ENCODE measurements at regions of chr9 and their contacts with region 1.

Region 1: DNA sequence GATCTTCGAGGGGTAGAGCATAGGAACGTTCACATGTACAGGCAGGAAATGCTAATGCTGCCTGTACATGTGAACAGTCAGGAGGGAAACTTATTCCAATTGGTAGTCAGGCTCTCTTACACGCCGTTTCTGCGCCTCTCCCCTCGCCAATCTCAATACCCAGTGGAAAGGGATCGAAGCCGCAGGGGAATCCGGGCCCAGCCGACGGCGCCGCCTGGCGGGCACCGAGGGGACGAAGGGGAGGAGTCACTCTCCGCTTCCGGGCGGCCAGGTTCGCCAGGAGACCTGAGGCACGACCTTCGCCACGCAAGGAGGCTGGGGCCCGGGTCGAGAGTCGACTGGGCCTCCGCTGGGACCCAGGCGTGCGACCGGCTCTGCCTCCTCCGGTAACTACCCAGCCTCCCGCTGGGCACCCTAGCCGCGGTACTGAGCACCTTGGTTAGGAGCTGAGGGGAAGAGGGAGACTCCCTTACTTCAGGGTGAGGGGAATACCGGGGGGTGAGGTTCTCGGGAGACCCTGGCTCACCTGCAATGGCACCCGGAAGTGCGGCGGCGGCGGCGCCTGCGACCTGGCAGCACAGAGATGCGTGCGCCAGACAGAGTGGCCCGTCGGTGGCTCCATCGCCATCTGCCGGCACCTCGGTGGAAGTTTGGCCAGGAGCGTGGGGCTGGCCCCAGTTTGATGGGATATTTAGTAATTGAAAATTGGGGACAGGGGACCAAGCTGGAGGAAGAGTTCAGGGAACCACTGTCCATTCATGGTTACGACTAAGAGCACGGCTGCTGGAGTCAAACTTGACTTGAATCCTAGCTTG is at the start of gene PIGO:
- DNase-seq: peak; percentile 85
- H3K4me3 Mint-ChIP-seq: peak within 1 kb of the TSS; percentile 85
- H3K27ac Mint-ChIP-seq: peak within 1 kb of the TSS; percentile 90
- H3K4me1 Mint-ChIP-seq: peaks cover 33% of the 10 kb centered on the region
- H3K27me3 Mint-ChIP-seq: no peaks in the 10 kb centered on the region
- total RNA-seq, gene PIGO: 34.4 and 39.7 TPM in 2 replicates

Region 2: DNA sequence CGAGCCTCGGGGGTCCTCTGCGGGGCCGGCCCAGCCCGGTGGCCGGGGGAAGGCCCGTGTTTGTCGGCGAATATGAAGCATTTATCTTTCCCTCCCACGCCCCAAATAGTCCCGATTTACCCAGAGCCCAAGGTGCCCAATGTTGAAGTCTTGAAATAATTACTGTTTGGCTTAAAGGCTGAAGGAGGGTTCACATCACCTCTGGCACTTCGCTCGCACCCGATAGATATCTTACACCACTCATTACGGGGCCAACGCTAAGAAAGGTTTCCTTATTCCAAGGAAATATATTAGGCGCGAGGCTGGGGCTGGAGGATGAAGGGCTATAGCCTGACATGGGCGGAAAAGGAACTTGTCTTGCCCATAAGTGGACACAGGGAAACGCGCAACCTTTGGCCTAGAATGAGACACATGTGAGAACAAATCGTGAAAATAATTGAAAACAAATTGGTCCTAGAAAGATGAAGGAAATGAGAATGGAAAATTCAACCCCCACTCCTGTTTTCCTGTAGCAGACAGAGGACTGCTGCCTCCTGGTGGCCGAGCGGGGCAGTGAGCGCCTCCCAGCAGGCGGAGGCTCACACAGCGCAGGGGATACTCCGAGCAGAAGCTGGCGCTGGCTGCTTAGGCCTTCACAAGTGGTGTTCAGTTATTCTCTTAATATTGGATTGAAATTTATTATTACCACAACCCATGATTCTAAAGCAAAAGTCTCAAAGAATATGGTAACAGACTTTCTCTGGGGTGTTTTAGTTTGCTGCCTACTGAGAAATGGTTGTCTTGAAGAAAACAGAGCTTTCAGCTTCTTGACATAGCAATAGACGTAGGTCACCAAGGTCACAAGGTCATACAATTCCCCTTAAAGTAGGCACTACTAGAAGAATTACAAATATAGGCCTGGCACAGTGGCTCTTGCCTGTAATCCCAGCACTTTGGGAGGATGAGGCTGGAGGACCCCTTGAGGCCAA is 394.2 kb before region 1 on chr9:
- intact Hi-C with region 1: loop called (anchors 5 kb)
- DNase-seq: peak; percentile 66
- H3K4me3 Mint-ChIP-seq: peak overlapping the region; percentile 82
- H3K27ac Mint-ChIP-seq: peak overlapping the region; percentile 68
- H3K4me1 Mint-ChIP-seq: peaks cover 6% of the 10 kb centered on the region
- H3K27me3 Mint-ChIP-seq: peaks cover 29% of the 10 kb centered on the region

Region 3: GRCh38 chr9:34759432-34760134 is 336.7 kb before region 1 on chr9:
- intact Hi-C with region 1: loop called (anchors 1 kb)
- DNase-seq: no peak
- H3K4me3 Mint-ChIP-seq: no peak overlapping the region
- H3K27ac Mint-ChIP-seq: no peak overlapping the region
- H3K4me1 Mint-ChIP-seq: no peaks in the 10 kb centered on the region
- H3K27me3 Mint-ChIP-seq: peaks cover 33% of the 10 kb centered on the region

Region 4: GRCh38 chr9:35051069-35051967 is 44.9 kb before region 1 on chr9:
- intact Hi-C with region 1: loop called (anchors 1 kb)
- DNase-seq: peak; percentile 29
- H3K4me3 Mint-ChIP-seq: no peak overlapping the region
- H3K27ac Mint-ChIP-seq: peak overlapping the region; percentile 27
- H3K4me1 Mint-ChIP-seq: peaks cover 5% of the 10 kb centered on the region
- H3K27me3 Mint-ChIP-seq: no peaks in the 10 kb centered on the region

Region 5: DNA sequence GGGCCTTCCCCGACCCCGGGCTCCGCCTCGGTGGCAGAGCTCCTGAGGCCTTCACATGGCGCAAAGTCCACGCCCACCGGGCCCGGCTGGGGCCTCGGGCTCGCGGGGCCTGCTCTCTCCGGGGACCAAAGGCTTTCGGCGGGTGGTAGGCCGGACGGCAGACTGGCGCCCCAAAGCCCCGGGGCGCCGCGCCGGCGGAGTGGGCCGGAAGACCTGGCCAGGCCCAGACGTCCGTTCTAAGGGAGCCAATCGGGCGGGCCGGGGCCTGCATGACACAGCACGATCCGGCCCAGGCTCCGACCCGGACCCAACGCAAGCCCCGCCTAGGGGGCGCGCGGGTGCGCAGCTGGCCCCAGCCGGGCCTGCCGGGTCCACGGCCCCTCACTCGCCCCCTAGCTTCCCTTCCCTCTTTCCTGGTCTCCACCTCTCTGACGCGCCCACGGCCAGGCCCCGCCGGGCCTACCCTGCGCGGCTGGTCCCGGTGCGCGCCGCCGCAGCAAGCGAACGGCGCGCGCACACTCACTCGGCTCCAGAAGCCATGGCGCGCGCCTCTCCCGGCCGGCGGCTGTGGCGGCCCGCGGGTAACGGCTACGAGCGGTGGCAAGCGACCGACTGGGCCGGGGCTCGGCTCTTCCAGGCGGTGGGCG is 24.3 kb before region 1 on chr9:
- intact Hi-C with region 1: loop called (anchors 1 kb)
- DNase-seq: peak; percentile 72
- H3K4me3 Mint-ChIP-seq: peak overlapping the region; percentile 95
- H3K27ac Mint-ChIP-seq: peak overlapping the region; percentile 92
- H3K4me1 Mint-ChIP-seq: peaks cover 55% of the 10 kb centered on the region
- H3K27me3 Mint-ChIP-seq: no peaks in the 10 kb centered on the region

Region 6: DNA sequence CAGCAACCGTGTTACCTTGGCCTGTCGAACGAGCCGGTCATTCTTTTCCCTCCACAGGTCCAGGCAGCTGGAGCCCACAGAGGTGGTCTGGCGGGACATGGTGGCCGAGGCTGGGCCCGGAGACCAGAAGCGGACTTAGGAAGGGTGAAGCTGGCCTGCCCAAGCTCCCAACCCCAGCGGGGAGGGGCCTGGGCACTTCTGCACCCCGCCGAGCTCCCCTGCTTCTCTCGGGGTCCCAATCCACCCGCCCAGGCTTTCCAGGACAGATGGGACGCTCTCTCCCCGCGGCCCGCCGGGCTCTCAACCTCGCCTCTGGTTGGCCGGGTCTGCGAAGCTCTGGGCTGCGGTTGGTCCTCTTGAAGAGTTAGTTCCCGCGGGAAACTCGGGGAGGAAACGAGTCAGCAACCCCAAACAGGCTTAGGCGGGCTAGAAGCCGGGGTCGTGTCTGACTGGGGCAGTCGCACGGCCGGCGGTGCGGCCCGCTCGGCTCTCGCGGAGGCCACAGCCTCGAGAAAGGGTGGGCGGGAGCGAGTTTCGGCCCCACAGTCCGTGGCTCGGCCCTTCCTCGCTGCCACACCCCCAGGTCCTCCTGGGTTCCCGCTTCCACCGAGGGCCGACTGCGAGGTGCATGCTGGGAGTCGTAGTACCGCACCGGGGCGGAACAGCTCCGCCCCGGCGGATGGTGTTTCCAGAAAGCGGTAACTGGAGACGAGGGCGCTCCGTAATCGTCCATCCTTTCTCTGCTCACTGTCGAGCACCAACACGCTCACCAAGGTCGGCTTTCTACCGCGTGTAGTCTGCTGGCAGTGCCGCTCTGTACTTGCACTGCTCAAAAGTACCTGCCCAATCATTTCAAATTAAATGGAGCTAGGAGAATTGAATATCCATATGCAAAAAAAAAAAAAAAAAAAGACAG is 16.6 kb before region 1 on chr9 and contains the start of gene FANCG:
- intact Hi-C with region 1: loop called (anchors 1 kb)
- DNase-seq: peak; percentile 86
- H3K4me3 Mint-ChIP-seq: peak within 1 kb of the TSS; percentile 96
- H3K27ac Mint-ChIP-seq: peak within 1 kb of the TSS; percentile 98
- H3K4me1 Mint-ChIP-seq: peaks cover 32% of the 10 kb centered on the region
- H3K27me3 Mint-ChIP-seq: no peaks in the 10 kb centered on the region
- total RNA-seq, gene FANCG: 102 and 104 TPM in 2 replicates

Region 7: DNA sequence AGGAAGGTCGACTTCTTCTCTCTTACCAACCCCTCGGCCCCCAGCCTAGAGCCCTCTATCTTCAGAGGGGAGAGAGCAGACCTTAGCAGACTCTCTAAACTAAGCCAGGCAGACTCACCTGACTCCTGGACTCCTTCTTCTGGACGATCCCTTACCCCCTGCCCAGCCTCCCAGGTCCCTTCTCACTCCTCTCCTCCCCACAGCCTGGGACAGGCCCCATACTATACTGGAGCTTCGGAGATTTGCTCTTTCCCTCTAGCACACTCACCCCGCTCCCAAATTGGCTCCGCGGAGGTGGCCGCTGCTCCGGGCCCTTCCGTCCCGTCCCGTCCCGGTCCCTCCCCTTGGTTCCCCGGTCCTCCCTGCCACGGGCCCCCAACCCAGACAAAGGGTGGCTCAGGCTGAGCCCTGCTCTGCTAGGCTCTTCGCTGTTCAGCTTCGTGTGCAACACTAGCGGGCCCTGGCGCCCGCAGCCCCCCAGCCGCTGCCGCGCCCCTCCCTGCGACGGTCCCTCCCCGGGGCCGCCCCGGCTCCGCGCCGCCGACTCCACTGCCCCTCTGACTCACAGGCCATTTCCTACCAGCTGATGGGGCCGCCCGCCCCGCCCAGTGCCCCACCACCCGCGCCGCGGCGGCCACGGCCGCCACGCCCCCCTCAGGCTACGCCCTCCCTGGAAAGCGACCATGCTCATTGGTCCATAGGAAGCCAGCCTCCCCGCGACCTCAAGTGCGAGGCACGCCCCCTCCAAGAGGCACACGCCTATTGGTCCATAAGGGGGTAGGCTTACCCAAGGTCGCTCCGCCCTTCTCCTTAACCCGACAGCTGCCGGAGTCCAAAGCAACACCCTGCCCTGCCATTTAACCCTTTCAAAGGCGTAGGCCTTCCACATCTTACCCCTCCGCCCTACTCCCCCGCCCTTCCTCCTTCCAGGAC is 15.0 kb after region 1 on chr9:
- intact Hi-C with region 1: loop called (anchors 1 kb)
- DNase-seq: peak; percentile 94
- H3K4me3 Mint-ChIP-seq: peak overlapping the region; percentile 77
- H3K27ac Mint-ChIP-seq: peak overlapping the region; percentile 90
- H3K4me1 Mint-ChIP-seq: peaks cover 61% of the 10 kb centered on the region
- H3K27me3 Mint-ChIP-seq: no peaks in the 10 kb centered on the region

Region 8: GRCh38 chr9:35162605-35163315 is 66.5 kb after region 1 on chr9:
- intact Hi-C with region 1: no loop called
- DNase-seq: no peak
- H3K4me3 Mint-ChIP-seq: peak overlapping the region; percentile 90
- H3K27ac Mint-ChIP-seq: no peak overlapping the region
- H3K4me1 Mint-ChIP-seq: peaks cover 17% of the 10 kb centered on the region
- H3K27me3 Mint-ChIP-seq: peaks cover 20% of the 10 kb centered on the region